GM10248 (cell line): ENCODE measurements at regions of chr3 and their contacts with region 1.

Region 1: DNA sequence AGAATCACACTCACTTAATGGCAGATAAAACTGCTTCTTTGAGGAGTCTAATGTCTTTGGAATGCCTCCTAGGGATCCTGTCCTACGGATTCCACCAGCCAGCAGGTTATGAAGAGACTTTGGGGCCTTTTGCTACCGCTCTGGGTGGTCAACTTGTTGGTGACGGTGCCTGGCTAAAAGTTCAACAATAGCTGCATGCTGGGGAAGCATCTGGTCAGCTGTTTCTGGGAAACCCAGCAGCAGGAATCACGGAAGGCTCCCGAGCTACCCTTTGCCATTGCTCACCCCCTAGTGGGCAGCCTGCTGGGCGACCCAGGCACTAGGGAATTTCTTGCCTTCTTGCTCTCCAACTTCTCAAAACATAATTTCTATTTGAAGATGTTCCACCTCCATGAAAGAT is 263.3 kb downstream of the NEK10 start:
- DNase-seq: no peak
- CTCF ChIP-seq: no peak

Region 2: DNA sequence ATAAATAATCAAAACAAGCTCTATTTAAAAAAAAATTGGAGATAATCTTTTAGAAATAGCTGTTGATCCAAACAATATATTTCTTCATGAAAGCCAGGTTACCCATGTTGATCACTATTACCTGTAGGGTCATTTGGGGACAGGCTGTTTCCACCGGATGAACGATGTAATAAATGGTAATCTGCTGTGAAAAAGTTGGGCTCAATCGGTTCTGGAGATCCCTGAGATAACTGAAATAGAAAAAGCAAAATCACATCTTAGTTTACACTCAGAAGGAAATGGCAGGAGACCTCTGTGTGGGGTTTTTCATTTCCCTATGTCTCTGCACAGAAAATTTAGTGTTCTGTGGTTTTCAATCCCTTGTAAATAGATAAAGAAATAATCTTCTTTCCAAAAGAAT is 13.7 kb after region 1 on chr3:
- CTCF ChIA-PET with region 1: interaction called, 11 read pairs
- POLR2A ChIA-PET with region 1: no interaction called
- DNase-seq: no peak
- CTCF ChIP-seq: no peak